Right cardiac atrium (tissue), 5 donors: ENCODE measurements at regions of chr14 and their contacts with region 1.

Region 1: DNA sequence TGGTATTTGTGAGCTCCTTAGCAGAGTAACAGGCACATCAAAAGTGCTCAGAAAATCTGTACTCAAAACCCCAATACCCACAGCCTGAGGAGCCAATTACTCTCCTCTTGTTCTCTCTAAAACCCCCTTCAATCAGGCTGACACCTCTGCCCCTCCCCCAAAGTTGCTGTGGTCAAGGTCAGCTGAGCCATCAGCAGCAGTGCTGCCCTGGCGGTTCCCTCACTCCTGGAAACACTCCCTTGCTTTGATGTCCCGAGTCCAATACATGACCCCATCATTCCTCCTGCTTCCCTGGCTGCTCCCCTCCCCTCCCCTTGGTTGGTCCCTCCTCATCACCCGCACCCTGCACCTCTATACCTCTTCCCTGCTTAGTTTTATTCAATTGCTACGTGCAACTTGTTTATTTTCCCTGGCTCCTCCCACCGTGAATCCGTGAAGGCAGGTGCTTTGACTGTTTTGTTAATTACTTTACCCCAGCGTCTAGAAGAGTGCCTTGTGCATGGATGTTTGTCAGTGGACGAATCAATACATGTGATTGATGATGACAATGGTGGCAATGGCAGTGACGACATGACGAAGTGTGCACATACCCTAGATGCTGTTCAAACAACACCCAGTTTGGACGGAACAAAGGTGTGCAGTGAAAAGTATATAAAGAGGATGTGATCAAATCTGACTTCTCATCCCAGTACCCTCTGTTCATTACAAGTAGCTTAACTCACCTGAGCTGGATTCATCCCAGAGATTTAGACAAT is 57.0 kb upstream of the C14orf132 start:
- DNase-seq: no peak
- ATAC-seq: no peak
- H3K4me3 ChIP-seq: no peak overlapping the region
- H3K27ac ChIP-seq: no peak overlapping the region
- H3K4me1 ChIP-seq: no peaks in the 10 kb centered on the region
- H3K27me3 ChIP-seq: no peaks in the 10 kb centered on the region

Region 2: DNA sequence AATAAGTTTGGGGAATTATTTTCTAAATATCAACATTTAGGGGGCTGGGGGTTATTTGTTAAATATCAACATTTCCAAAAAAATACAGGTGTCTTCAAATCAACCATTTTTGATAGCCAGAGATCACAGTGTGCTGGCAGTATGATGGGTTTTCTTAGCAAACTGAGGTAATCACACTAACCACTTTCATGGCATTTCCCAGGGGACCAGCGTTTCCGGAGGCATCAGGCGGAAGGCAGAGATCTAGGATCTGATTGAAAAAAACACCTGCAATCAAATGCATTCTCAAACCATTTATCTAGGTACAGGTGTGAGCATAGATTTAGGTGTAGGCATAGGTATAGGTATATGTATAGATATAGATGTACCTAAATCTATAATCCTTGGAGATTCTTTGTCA is 412.7 kb before region 1 on chr14:
- intact Hi-C with region 1: loop called in 1 of 4 experiments (anchors 2 kb)
- DNase-seq: no peak
- ATAC-seq: no peak
- H3K4me3 ChIP-seq: no peak overlapping the region
- H3K27ac ChIP-seq: no peak overlapping the region
- H3K4me1 ChIP-seq: no peaks in the 10 kb centered on the region
- H3K27me3 ChIP-seq: no peaks in the 10 kb centered on the region